HepG2 (cell line): ENCODE measurements at regions of chr4 and their contacts with region 1.

Region 1: DNA sequence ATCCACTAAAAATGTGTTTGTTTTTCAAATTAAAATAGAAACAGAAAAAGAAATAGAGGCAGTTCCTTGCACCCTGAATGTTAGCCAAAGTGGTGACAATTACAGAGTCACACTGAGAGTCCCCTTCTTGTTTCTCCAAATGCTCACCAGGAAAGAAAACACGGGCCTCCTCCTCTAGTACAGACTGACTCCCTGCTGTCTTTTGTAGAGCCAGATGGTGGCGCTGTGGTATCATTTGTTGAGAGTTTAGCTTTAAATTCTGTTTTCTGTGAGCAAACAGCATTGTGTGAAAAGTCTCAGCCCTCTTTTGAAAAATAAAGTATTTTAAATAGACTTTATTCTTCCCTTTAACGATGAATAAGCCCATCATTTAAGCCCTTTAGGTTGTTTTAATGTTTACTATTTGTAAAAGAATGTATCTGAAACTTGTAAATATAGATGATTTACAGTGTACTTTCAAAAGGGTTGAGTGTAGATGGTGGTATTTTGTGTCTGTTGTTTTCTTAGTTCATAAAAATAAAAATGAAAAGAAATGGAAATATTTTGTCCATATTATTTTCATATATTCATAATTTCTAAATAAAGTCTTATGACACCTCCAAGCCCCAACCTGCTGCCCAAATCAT is 36.9 kb upstream of the ATOH1 start:
- DNase-seq: peak; percentile 50
- ATAC-seq: peak; percentile 88
- H3K4me3 ChIP-seq: no peak overlapping the region
- H3K27ac ChIP-seq: no peak overlapping the region
- H3K4me1 ChIP-seq: no peaks in the 10 kb centered on the region
- H3K27me3 ChIP-seq: 0 out of 5 replicates have a peak, but pooled peaks cover 0 to 3% of the 10 kb centered on the region in 2 experiments
- CTCF ChIP-seq: peak; percentile 82
- EP300 ChIP-seq: no peak
- POLR2A ChIP-seq: no peak
- RAD21 ChIP-seq: peak; percentile 59; the same call in 1 of the 2 replicates

Region 2: DNA sequence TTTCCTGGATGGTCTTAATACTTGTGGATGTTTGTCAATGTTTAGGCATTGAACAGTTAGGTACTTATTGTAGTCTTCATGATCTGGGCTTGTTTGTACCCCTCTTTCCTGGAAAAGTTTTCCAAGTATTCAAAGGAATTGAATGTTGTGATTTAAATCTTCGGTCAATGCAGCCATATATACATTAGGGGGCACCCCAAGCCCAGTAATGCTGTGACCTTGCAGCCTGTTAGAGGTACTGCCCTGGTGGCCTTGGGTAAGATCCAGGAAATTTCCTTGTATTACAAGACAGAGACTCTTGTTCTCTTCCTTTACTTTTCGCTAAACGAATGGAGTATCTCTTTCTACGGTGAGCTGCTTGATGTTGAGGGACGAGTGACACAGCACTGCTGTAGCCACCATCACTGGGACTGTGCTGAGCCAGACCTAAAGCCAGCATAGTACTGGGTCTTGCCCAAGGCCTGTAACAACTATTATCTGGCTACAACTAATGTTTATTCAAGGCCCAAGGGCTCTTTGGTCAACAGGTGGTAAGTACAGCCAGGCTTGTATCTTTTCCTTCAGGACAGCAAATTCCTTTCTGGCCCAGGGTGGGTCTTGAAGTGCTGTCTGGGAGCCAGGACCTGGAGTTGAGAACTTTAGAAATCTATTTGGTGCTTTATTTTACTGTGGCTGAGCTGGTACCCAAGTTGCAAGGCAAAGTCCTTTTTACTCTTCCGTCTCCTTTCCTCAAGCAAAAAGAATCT is 81.4 kb before region 1 on chr4:
- CTCF ChIA-PET with region 1: no interaction called
- POLR2A ChIA-PET with region 1: no interaction called
- in situ Hi-C with region 1: no loop called
- intact Hi-C with region 1: loop called (anchors 1 kb)
- DNase-seq: peak; percentile 20
- ATAC-seq: peak; percentile 92
- H3K4me3 ChIP-seq: no peak overlapping the region
- H3K27ac ChIP-seq: no peak overlapping the region
- H3K4me1 ChIP-seq: no peaks in the 10 kb centered on the region
- H3K27me3 ChIP-seq: no peaks in the 10 kb centered on the region
- CTCF ChIP-seq: peak; percentile 61
- EP300 ChIP-seq: no peak
- POLR2A ChIP-seq: no peak
- RAD21 ChIP-seq: peak; percentile 31; the same call in 1 of the 2 replicates

Region 3: DNA sequence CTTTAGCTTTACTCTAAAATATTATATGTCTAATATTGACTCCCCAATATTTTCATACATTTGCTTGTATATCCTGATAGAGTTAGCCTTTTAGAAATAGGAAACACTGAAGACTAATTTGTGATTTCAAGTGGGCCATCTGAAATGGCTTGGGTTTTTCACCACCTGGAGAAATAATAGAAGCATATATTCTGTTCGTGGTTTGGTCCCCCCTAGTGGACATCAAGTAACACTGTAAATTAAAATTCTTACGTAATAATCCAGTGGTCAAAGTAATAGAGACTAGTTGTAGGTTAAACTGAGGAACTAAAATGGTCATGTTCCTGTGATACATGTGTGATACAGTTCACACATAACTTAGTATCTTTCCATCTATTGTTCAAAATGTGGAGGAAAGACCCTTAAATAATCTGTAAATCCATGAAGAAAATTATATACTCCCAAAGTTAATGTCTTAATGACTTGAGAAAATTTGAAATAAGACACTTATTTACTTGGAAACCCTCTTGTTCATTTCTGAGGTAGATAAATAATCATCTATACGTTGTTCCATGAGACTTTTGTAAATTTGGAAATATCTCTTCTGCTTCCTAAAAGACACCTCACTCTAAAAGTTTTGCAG is 336.1 kb after region 1 on chr4:
- CTCF ChIA-PET with region 1: interaction called, 18 read pairs
- POLR2A ChIA-PET with region 1: no interaction called
- in situ Hi-C with region 1: loop called (anchors 5 kb)
- intact Hi-C with region 1: loop called (anchors 1 kb)
- DNase-seq: peak; percentile 30
- ATAC-seq: no peak
- H3K4me3 ChIP-seq: no peak overlapping the region
- H3K27ac ChIP-seq: no peak overlapping the region
- H3K4me1 ChIP-seq: no peaks in the 10 kb centered on the region
- H3K27me3 ChIP-seq: no peaks in the 10 kb centered on the region
- CTCF ChIP-seq: peak; percentile 31
- EP300 ChIP-seq: no peak
- POLR2A ChIP-seq: no peak
- RAD21 ChIP-seq: no peak

Region 4: GRCh38 chr4:94256828-94257227 is 465.1 kb after region 1 on chr4:
- CTCF ChIA-PET with region 1: interaction called, 10 read pairs
- POLR2A ChIA-PET with region 1: no interaction called
- in situ Hi-C with region 1: loop called (anchors 25 kb)
- intact Hi-C with region 1: loop called (anchors 2 kb)
- DNase-seq: peak; percentile 2
- ATAC-seq: 0 out of 3 replicates have a peak, but pooled peaks have one; percentile 36
- H3K4me3 ChIP-seq: no peak overlapping the region
- H3K27ac ChIP-seq: no peak overlapping the region
- H3K4me1 ChIP-seq: no peaks in the 10 kb centered on the region
- H3K27me3 ChIP-seq: no peaks in the 10 kb centered on the region
- CTCF ChIP-seq: peak; percentile 36; the same call in 1 of the 2 replicates
- EP300 ChIP-seq: no peak
- POLR2A ChIP-seq: no peak
- RAD21 ChIP-seq: no peak

Region 5: DNA sequence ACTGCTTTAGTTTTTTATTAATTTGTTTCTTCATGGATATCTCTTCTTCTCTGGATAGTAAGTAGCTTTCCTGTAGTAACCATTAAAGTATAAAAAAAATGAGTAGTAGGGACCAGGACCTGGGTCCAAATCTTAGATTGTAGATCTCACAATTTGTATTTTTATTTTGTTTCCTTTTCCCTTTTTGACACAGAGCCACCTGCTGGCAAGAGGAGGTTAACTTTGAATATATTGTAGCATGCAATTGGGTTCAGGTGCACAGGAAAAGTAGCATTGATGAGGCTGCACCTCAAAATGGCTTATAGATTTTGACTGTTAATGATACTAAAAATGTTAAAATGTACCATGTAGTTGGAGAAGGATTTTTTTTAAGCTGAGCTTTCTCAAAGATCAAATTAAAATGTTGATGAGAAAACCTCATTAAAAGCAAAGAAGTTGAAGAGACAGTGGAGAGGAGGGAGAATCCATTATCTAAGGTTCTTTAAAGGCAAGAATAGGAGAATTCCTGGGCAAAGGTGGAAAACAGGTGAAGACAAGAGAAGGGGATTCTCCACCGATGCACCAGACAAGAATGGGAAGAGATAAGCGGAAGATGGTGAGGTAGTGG is 599.2 kb after region 1 on chr4:
- CTCF ChIA-PET with region 1: interaction called, 15 read pairs
- POLR2A ChIA-PET with region 1: no interaction called
- in situ Hi-C with region 1: loop called (anchors 5 kb)
- intact Hi-C with region 1: loop called (anchors 1 kb)
- DNase-seq: peak; percentile 20
- ATAC-seq: peak; percentile 45; the same call in 2 of the 3 replicates
- H3K4me3 ChIP-seq: no peak overlapping the region
- H3K27ac ChIP-seq: no peak overlapping the region
- H3K4me1 ChIP-seq: no peaks in the 10 kb centered on the region
- H3K27me3 ChIP-seq: 0 out of 5 replicates have a peak, but pooled peaks cover 0 to 6% of the 10 kb centered on the region in 2 experiments
- CTCF ChIP-seq: peak; percentile 58
- EP300 ChIP-seq: no peak
- POLR2A ChIP-seq: no peak
- RAD21 ChIP-seq: peak; percentile 21; the same call in 1 of the 2 replicates

Region 6: DNA sequence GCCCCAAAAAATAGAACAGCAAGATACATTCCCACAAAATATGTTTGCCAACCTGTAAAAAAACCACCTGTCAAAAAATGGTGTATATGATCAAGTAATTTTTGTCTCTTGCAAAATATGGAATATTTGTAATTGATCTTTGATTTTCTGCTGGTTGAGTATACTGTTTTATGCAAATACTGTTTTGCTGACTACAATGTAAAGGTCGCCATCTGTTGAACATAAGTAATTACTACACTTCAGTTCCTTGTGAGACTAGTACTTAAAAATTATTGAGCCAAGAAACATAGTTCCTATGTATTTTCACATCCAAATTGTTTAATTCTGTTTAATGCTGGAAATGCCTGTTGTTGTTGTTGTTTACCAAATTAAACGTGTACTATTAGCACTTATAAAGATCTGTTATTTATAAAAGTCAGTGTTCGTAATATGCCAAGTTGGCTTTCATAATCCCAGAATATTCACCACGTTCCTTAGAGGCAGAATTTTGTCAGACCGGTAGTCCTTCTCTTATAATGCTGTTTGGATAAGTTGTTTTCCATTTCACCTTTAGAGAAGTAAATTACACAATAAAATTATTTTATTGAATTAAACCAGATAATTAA is 804.3 kb after region 1 on chr4:
- CTCF ChIA-PET with region 1: no interaction called
- POLR2A ChIA-PET with region 1: no interaction called
- in situ Hi-C with region 1: loop called (anchors 25 kb)
- intact Hi-C with region 1: no loop called
- DNase-seq: peak; percentile 48
- ATAC-seq: 0 out of 3 replicates have a peak, but pooled peaks have one; percentile 51
- H3K4me3 ChIP-seq: no peak overlapping the region
- H3K27ac ChIP-seq: no peak overlapping the region
- H3K4me1 ChIP-seq: no peaks in the 10 kb centered on the region
- H3K27me3 ChIP-seq: no peaks in the 10 kb centered on the region
- CTCF ChIP-seq: peak; percentile 65
- EP300 ChIP-seq: no peak
- POLR2A ChIP-seq: no peak
- RAD21 ChIP-seq: peak; percentile 70